ENCODE measurements at regions of chr5 and their contacts with region 1.

Region 1: DNA sequence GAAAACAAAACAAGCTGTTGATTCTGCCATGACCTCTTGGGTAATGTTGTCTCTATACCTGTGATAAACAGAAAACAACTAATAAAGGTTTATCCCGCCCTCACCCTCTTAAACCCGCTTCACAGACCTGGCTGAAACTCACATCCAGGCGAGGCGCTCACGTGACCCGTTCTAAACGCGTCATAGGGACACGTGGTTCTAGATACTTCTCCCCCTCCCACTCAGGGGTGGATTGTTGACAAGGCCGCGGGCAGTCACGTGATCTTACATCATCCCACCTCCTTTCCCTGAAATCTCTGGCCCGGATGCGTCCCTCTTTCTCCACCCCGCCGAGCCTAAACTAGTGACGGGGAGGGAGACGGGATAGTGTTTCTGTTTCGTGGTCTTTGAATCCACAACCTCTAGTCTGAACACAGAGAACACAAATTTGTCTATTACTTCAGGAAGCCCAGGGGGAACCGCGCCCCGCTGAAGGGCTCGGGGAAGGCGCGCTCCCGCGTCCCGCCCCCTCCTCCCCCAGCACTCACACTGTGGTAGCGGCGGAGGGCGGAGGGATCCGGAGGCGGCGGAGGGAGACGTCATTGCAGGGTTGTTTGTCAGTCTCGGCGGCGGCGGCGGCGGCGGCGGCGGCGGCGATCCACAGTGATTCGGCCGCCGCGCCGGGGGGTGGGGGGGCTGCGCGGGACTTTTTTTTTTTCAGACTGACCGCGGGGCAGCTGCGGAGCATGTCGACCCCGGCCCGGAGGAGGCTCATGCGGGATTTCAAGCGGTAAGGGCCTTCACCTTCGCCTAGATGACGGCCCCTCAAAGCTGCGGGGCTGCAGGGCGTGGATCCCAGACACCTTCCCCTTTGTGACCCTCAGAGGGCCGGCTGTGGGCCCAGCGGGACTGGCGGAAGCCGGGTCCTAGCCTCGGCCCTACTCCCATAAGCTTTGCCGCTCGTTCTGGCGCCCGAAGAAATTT is at the start of gene UBE2B:
- DNase-seq: peak; percentile 91 to 100 (median 94)
- ATAC-seq: peak; percentile 80
- H3K4me3 ChIP-seq: peak within 1 kb of the TSS; percentile 81
- H3K27ac ChIP-seq: peak within 1 kb of the TSS; percentile 99
- H3K4me1 ChIP-seq: peaks cover 5 to 9% of the 10 kb centered on the region in 2 experiments; a peak in 3 of 5 replicates
- H3K27me3 ChIP-seq: no peaks in the 10 kb centered on the region
- CTCF ChIP-seq: no peak
- EP300 ChIP-seq: peak; percentile 52
- POLR2A ChIP-seq: peak; percentile 65
- RAD21 ChIP-seq: no peak
- polyA plus RNA-seq, gene UBE2B: 165 to 198 TPM

Region 2: GRCh38 chr5:134304311-134304710 is 66.8 kb before region 1 on chr5:
- CTCF ChIA-PET with region 1: no interaction called
- POLR2A ChIA-PET with region 1: no interaction called
- in situ Hi-C with region 1: no loop called
- intact Hi-C with region 1: loop called (anchors 5 kb)
- DNase-seq: no peak
- ATAC-seq: no peak
- H3K4me3 ChIP-seq: no peak overlapping the region
- H3K27ac ChIP-seq: no peak overlapping the region
- H3K4me1 ChIP-seq: no peaks in the 10 kb centered on the region
- H3K27me3 ChIP-seq: no peaks in the 10 kb centered on the region
- CTCF ChIP-seq: no peak
- EP300 ChIP-seq: no peak
- POLR2A ChIP-seq: no peak
- RAD21 ChIP-seq: no peak